Vagina (tissue), 2 donors: ENCODE measurements at regions of chr2 and their contacts with region 1.

Region 1: GRCh38 chr2:30694286-30695055 is 112.8 kb downstream of the CAPN13 start:
- DNase-seq: peak in 1 of 2 donors; percentile 75
- H3K4me3 ChIP-seq: no peak overlapping the region
- H3K27ac ChIP-seq: no peak overlapping the region
- H3K4me1 ChIP-seq: peaks cover 10% of the 10 kb centered on the region
- H3K27me3 ChIP-seq: no peaks in the 10 kb centered on the region
- CTCF ChIP-seq: no peak
- POLR2A ChIP-seq: no peak

Region 2: GRCh38 chr2:30165050-30165520 is 529.4 kb before region 1 on chr2:
- intact Hi-C with region 1: loop called (anchors 5 kb)
- DNase-seq: no peak
- H3K4me3 ChIP-seq: no peak overlapping the region
- H3K27ac ChIP-seq: no peak overlapping the region
- H3K4me1 ChIP-seq: peaks cover 14% of the 10 kb centered on the region
- H3K27me3 ChIP-seq: no peaks in the 10 kb centered on the region
- CTCF ChIP-seq: peak; percentile 71 to 88 (median 75)
- POLR2A ChIP-seq: no peak